Tibial artery (tissue), 4 donors: ENCODE measurements at regions of chr9 and their contacts with region 1.

Region 1: DNA sequence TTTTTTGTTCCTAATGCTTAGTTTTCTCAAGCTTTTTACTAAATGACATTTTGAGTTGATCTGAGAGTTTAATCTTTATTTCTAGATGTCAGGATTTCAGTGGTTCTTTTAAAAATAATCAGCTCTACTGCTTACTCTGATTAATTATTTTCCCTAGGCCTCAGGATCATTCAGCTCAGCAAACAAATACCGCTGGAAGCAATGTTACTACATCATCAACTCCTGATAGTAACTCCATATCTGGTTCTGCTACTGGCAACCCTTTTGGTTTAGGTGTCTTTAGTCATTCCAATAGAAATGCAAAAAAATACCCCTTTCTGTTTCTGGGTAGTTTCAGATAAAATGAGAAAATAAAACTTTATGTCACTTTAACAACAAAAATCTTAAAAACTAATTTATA is 5.6 kb upstream of the IDNK start:
- DNase-seq: no peak
- H3K4me3 ChIP-seq: no peak overlapping the region
- H3K27ac ChIP-seq: no peak overlapping the region
- H3K4me1 ChIP-seq: peaks cover 0 to 3% (median 0%) of the 10 kb centered on the region in 4 donors
- H3K27me3 ChIP-seq: no peaks in the 10 kb centered on the region
- CTCF ChIP-seq: no peak

Region 2: GRCh38 chr9:83266331-83266665 is 351.0 kb before region 1 on chr9:
- intact Hi-C with region 1: no loop called
- DNase-seq: no peak
- H3K4me3 ChIP-seq: no peak overlapping the region
- H3K27ac ChIP-seq: peak overlapping the region; percentile 31 to 47
- H3K4me1 ChIP-seq: peaks cover 0 to 16% (median 10%) of the 10 kb centered on the region in 4 donors
- H3K27me3 ChIP-seq: no peaks in the 10 kb centered on the region
- CTCF ChIP-seq: no peak

Region 3: DNA sequence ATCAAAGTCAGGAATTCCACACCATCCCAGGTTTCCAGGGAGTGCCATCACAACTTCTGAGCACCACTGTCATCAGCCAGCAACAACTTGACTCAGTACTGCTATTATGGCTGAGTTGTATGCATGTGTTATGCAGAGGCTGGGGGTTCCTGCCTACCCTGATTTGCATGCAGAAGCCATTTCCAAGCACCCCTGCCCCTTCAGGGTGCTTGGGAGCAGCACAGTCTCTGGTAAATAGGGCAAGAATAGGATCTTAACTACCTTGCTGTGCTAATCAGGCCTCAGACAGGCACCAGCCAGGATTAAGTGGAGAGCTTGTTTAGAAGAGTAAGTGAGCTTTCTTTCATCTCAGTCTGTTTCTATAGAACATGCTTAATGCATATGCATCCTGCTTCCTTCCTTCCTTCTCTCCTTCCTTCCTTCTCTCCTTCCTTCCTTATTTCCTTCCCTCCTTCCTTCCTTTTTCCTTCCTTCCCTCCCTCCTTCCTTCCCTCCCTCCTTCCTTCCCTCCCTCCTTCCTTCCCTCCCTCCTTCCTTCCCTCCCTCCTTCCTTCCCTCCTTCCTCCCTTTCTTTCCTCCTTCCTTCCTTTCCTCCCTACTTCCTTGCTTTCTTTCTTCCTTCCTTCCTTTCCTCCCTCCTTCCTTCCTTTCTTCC is 254.8 kb before region 1 on chr9:
- intact Hi-C with region 1: loop called (anchors 10 kb)
- DNase-seq: no peak
- H3K4me3 ChIP-seq: no peak overlapping the region
- H3K27ac ChIP-seq: no peak overlapping the region
- H3K4me1 ChIP-seq: peaks cover 0 to 17% (median 6%) of the 10 kb centered on the region in 4 donors
- H3K27me3 ChIP-seq: no peaks in the 10 kb centered on the region
- CTCF ChIP-seq: no peak

Region 4: DNA sequence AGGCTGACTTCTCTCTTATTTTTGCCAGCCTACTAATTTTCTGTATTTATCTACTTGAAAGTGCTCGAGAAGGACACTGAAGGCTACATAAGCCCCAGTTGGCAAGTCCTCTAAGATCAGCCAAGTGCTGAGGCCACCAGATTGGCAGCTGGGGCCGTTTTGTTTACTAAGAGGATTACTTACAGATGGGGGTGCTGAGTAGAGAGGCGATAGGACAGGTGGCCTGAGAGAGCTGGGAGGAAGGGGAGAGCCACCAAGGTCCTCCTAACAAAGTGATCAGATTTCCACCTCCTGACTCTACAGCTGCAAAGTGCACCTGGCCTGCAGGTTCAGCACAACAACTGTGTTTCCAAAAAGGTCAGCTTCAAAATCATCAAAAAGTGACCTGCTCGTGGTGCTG is 112.0 kb before region 1 on chr9:
- intact Hi-C with region 1: no loop called
- DNase-seq: no peak
- H3K4me3 ChIP-seq: no peak overlapping the region
- H3K27ac ChIP-seq: no peak overlapping the region
- H3K4me1 ChIP-seq: peaks cover 0 to 7% (median 0%) of the 10 kb centered on the region in 4 donors
- H3K27me3 ChIP-seq: no peaks in the 10 kb centered on the region
- CTCF ChIP-seq: no peak